ENCODE measurements at regions of chr14 and their contacts with region 1.

Region 1: DNA sequence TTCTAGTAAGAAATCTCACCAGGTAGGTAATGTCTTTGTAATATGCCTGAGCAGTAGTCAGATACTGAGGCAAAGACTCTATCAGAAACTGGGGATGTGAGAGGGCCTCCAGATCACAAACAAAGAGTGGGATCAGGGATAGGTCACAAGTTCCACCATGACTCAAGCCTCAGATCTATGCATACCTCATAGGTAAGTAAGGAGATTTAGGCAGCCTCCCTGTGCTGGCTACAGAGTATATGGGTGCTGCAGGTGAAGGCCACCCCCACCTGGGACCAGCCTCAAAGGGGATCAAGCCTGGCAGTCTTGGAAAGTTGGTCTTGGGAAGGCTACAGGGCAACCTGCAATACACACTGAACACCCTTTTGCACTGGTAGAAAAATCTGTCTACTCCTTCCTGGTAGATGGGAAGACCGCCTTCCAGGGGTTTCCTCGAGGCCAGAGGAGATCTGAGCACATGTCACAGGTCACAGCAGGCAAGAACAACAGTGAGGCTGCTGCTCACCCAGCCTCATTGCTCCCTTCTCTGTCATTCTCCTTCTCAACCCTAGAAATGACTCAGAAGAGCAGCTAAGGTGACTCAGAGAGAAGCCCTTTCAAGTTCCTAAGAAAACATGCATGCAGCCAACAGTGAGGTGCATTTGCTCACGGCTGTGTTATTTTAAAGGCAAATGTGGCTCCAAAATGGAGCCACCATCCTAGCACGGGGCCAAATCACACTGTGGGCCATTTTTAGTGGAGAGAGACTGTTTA is 143.4 kb upstream of the CDKN3 start:
- DNase-seq: peak; percentile 99
- ATAC-seq: peak; percentile 59
- H3K4me3 ChIP-seq: 0 out of 2 replicates have a peak overlapping the region, but pooled peaks have one; percentile 37
- H3K27ac ChIP-seq: peak overlapping the region; percentile 91
- H3K4me1 ChIP-seq: peaks cover 43% of the 10 kb centered on the region
- H3K27me3 ChIP-seq: no peaks in the 10 kb centered on the region
- CTCF ChIP-seq: no peak

Region 2: DNA sequence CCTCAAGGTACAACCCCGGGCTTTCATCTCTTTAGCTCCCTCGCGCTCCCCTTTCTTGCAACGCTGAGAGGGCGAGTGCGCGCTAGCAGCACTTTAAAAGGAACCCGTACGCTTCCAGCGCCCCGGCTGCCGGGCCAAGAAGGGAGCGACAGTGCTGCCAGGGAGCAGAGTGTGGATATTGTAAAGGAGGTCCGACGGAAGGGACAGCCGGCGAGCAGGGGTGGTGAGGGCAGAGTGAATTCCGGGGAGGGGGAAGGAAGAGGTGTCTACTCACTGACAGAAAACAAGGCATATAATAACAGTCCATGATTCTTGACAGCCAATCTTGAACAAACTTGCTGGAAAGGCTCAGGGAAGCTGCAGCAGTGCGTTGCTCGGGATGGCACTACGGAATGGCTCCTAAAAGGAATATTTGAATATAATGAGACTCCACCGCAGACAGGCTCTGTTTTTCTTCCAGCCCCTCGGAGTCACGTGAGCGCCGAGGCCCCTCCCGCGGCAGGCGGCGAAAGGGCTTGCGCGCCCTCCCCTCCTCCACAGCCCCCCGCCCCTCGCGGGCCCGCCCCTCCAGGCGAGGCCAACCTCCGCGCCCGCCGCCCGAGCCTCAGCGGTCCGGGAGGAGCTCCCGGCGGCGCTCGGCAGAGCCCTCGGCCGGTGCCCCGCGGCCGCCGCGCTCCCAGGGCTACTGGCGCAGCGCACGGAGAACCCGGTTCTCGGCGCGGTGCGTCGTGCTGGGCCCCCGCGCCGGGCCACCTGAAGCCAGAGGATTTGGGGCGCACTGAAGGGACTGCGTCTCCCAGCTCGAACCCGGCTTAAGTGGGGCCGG is 300.2 kb before region 1 on chr14:
- CTCF ChIA-PET with region 1: no interaction called
- POLR2A ChIA-PET with region 1: interaction called, 7 read pairs
- intact Hi-C with region 1: loop called (anchors 5 kb)
- DNase-seq: peak; percentile 88
- ATAC-seq: peak; percentile 75
- H3K4me3 ChIP-seq: peak overlapping the region; percentile 91
- H3K27ac ChIP-seq: peak overlapping the region; percentile 31; the same call in 1 of the 2 replicates
- H3K4me1 ChIP-seq: 0 out of 2 replicates have a peak, but pooled peaks cover 4% of the 10 kb centered on the region
- H3K27me3 ChIP-seq: no peaks in the 10 kb centered on the region
- CTCF ChIP-seq: no peak

Region 3: DNA sequence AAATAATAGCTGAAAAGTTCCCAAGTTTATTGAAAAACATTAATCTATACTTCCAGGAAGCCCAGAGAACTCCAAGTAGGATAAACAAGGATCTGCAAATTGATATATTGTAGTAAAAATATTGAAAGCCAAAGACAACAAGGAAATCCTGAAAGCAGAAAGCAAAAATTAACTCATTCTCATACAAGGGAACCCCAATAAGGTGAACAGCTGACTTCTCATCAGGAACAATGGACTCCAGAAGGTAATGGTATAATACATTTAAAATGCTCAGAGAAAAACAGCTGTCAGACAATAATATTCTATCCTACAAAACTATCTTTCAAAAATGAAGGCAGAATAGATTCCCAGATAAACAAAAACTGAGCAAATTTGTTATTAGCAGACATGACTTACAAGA is 158.6 kb before region 1 on chr14:
- CTCF ChIA-PET with region 1: no interaction called
- POLR2A ChIA-PET with region 1: no interaction called
- intact Hi-C with region 1: no loop called
- DNase-seq: no peak
- ATAC-seq: no peak
- H3K4me3 ChIP-seq: no peak overlapping the region
- H3K27ac ChIP-seq: no peak overlapping the region
- H3K4me1 ChIP-seq: peaks cover 14% of the 10 kb centered on the region
- H3K27me3 ChIP-seq: no peaks in the 10 kb centered on the region
- CTCF ChIP-seq: no peak

Region 4: DNA sequence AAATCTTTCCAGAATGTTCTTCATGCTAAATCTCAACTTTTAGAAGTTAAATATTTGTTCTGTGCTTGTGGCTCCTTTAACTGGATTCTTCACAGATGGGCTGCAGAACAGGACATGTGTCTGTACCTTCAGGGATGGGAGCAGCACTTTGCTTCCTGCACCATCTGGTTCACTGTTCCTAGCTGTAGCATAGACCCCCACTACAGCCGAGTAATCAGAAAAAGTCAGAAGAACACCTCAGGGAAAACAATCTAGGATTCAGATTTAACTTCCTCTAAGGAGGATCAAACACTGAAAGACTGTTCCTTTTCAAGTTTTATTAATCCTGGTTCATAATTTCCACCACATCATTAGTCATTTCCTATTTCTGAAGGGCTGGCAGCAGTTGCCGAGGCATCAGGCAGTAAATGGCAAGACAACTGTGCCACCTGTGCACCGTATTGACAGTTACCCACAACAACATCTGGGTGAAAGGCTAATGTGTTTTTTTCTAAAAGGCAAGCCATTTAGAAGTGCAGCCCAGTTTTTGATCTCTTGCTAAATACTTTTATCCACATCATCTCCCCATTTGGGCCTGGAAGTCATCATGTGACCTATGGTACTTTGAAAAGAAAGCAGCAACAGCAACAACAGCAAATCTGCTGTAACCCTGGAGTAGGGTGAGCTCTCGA is 84.0 kb before region 1 on chr14:
- CTCF ChIA-PET with region 1: interaction called, 13 read pairs
- POLR2A ChIA-PET with region 1: interaction called, 6 read pairs
- intact Hi-C with region 1: loop called (anchors 1 kb)
- DNase-seq: peak; percentile 100
- ATAC-seq: peak; percentile 85
- H3K4me3 ChIP-seq: peak overlapping the region; percentile 8; the same call in 1 of the 2 replicates
- H3K27ac ChIP-seq: peak overlapping the region; percentile 86
- H3K4me1 ChIP-seq: peaks cover 76% of the 10 kb centered on the region
- H3K27me3 ChIP-seq: no peaks in the 10 kb centered on the region
- CTCF ChIP-seq: peak; percentile 31; the same call in 1 of the 2 replicates

Region 5: DNA sequence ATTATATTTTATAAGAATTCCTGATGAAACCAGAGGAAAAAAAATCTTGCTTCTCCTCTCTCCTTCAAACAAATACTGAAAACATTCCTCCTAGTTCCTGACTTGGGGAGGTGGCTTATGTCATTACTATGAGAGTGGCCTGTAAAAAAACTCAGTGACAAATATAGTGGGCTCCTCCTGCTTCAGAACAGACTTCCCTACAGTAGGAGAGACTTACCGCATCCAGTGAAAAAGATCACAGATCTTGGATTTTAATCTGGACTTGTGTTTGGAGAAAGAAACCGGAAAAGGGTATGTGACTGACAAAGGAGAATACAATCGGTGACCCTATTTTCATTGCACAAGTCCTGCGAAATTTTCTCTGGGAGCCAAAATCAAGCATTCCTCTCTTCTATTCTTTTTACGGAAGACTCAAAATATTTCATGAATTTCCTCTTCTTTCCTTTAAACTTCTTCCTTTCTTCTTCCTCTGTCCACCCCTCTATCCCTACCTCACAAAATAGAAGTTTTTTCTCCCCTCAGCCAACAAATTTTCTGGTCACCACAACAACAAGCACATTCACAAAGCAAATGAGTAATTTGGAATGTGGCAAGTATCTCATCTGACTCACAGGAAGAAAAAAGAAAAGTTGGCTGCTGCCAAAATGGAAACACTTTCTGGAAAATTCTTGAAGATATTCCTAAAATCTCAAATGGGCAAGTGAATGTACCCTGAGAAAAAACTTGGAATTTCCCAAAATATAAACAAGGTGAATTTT is 41.6 kb before region 1 on chr14:
- CTCF ChIA-PET with region 1: no interaction called
- POLR2A ChIA-PET with region 1: interaction called, 4 read pairs
- intact Hi-C with region 1: loop called (anchors 1 kb)
- DNase-seq: peak; percentile 99
- ATAC-seq: peak; percentile 89
- H3K4me3 ChIP-seq: peak overlapping the region; percentile 25
- H3K27ac ChIP-seq: peak overlapping the region; percentile 84
- H3K4me1 ChIP-seq: peaks cover 36% of the 10 kb centered on the region
- H3K27me3 ChIP-seq: no peaks in the 10 kb centered on the region
- CTCF ChIP-seq: no peak

Region 6: GRCh38 chr14:54329082-54329695 is 75.8 kb after region 1 on chr14:
- CTCF ChIA-PET with region 1: interaction called, 55 read pairs
- POLR2A ChIA-PET with region 1: interaction called, 4 read pairs
- intact Hi-C with region 1: loop called (anchors 1 kb)
- DNase-seq: peak; percentile 96
- ATAC-seq: peak; percentile 98
- H3K4me3 ChIP-seq: no peak overlapping the region
- H3K27ac ChIP-seq: no peak overlapping the region
- H3K4me1 ChIP-seq: peaks cover 17% of the 10 kb centered on the region
- H3K27me3 ChIP-seq: no peaks in the 10 kb centered on the region
- CTCF ChIP-seq: peak; percentile 100

Measured in PC-3 (cell line).